ENCODE measurements at regions of chr11 and their contacts with region 1.

Region 1: GRCh38 chr11:68257475-68258362 is 14.1 kb downstream of the C11orf24 start:
- DNase-seq: peak; percentile 59
- H3K4me3 ChIP-seq: no peak overlapping the region
- CTCF ChIP-seq: peak; percentile 85

Region 2: DNA sequence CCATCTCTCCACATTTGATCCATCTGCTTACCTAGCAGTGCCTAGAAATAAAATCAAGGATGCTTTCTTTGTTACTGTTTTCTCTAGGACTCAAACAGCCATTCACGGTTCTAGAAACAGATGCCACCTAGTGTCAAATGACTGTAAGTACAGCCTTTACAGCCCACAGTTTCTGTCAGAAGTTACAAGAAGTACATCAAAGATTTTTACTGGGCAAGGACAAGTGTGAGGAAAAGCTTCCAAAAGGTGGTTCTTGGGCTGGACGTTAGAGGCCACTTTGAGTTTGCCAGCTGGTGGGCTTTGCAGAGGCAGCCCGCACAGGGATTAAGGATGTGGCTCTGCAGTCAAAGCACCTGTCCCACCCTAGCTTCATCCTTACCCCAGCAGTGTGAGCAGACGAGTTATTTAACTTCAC is 51.5 kb before region 1 on chr11:
- CTCF ChIA-PET with region 1: interaction called, 15 read pairs
- POLR2A ChIA-PET with region 1: no interaction called
- DNase-seq: no peak
- H3K4me3 ChIP-seq: no peak overlapping the region
- CTCF ChIP-seq: peak; percentile 77

Region 3: GRCh38 chr11:68226421-68226820 is 31.3 kb before region 1 on chr11:
- CTCF ChIA-PET with region 1: interaction called, 12 read pairs
- POLR2A ChIA-PET with region 1: no interaction called
- DNase-seq: no peak
- H3K4me3 ChIP-seq: no peak overlapping the region
- CTCF ChIP-seq: no peak

Region 4: GRCh38 chr11:68370211-68371111 is 112.7 kb after region 1 on chr11:
- CTCF ChIA-PET with region 1: interaction called, 12 read pairs
- POLR2A ChIA-PET with region 1: no interaction called
- DNase-seq: no peak
- H3K4me3 ChIP-seq: no peak overlapping the region
- CTCF ChIP-seq: no peak

Region 5: DNA sequence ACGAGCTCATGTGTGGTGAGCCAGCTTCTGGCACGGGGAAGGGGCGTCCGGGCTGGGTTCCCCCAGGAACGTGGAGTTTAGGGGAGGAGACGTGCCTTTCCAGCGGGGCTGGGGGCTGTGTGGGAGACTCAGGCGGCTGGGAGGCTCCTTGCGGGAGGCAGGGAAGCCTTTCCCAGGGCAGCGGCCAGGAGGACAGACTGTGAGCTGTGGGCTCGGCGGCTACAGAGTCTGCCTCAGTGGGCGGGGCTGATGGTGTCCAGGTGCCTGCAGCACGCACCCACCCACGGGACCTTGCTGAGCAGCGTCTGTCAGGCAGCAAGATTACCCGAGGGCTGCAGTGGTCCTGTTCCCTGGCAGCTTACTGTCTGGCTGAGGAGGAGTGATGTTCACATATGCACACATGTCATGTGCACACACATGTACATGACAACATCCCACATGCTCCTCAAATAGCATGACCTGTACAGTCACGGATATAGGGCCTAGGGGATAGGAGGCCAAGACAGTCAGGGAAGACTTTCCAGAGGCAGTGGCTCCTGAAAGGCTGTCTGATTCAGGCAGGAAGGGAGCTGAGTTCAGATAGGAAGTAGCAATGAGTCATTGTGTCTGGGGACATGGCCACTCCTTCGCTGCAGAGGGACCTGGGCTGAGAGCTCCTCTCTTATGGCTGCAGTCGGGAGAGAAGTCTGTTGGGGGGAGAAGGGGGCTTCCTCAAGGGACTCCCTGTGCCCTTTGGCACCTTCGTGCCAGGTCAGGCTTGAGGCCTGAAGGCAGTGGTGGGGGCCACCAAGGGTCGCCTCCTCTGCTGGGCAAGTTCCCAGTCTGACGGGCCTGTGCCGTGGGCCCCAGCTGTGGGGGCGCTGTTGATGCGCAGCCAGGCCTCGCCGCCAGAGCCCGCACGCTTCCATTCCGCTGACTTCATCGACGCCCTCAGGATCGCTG is 179.5 kb after region 1 on chr11:
- CTCF ChIA-PET with region 1: interaction called, 12 read pairs
- POLR2A ChIA-PET with region 1: no interaction called
- DNase-seq: no peak
- H3K4me3 ChIP-seq: no peak overlapping the region
- CTCF ChIP-seq: no peak

Region 6: GRCh38 chr11:68542617-68543016 is 284.9 kb after region 1 on chr11:
- CTCF ChIA-PET with region 1: no interaction called
- POLR2A ChIA-PET with region 1: no interaction called
- DNase-seq: peak; percentile 67
- H3K4me3 ChIP-seq: no peak overlapping the region
- CTCF ChIP-seq: no peak